ENCODE measurements at regions of chr11 and their contacts with region 1.

Region 1: GRCh38 chr11:6377902-6378639 is 12.2 kb upstream of the SMPD1 start:
- DNase-seq: peak in 1 of 9 experiments; percentile 45
- ATAC-seq: peak; percentile 81
- H3K4me3 ChIP-seq: peak overlapping the region in 1 of 2 experiments; percentile 17
- H3K4me3 Mint-ChIP-seq: peak overlapping the region; percentile 58
- H3K27ac ChIP-seq: peak overlapping the region in 1 of 2 experiments; percentile 7
- H3K27ac Mint-ChIP-seq: peak overlapping the region; percentile 86
- H3K4me1 ChIP-seq: peaks cover 18% of the 10 kb centered on the region
- H3K4me1 Mint-ChIP-seq: peaks cover 28% of the 10 kb centered on the region
- H3K27me3 ChIP-seq: no peaks in the 10 kb centered on the region
- H3K27me3 Mint-ChIP-seq: no peaks in the 10 kb centered on the region
- CTCF ChIP-seq: no peak

Region 2: DNA sequence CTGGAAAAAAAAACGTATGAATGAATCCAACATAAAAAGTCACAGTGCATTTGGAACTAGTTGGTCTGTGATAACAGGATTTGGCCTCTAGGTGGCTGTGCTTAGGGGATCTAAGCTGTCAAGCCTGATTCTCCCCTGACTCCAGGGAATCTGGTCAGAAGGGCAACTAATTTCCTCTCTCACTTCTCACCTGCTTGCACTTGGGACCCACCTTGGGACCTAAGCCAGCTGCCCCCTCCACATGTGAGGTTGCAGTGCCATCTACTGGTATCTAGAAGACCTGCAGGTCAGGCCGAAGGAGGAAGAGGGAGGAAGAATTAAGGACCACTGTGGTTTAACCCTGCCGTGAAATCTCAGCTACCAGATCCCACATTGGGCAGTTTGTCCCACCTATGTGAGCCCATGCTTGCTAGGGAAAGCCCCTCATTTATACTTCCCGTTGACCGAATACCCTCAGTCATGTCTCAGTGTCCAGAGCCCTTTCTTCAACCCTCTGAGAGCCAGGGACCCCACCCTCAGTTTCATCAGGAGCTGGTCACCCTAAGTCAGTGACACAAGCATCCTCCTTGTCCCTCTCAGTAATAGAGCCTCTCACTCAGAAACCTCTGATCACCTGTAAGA is 24.6 kb before region 1 on chr11:
- CTCF ChIA-PET with region 1: interaction called, 16 read pairs
- POLR2A ChIA-PET with region 1: interaction called, 6 read pairs
- intact Hi-C with region 1: no loop called
- DNase-seq: peak; percentile 26 to 73 (median 55)
- ATAC-seq: peak; percentile 75
- H3K4me3 ChIP-seq: no peak overlapping the region
- H3K4me3 Mint-ChIP-seq: no peak overlapping the region
- H3K27ac ChIP-seq: no peak overlapping the region
- H3K27ac Mint-ChIP-seq: no peak overlapping the region
- H3K4me1 ChIP-seq: no peaks in the 10 kb centered on the region
- H3K4me1 Mint-ChIP-seq: peaks cover 2% of the 10 kb centered on the region
- H3K27me3 ChIP-seq: no peaks in the 10 kb centered on the region
- H3K27me3 Mint-ChIP-seq: no peaks in the 10 kb centered on the region
- CTCF ChIP-seq: peak; percentile 92

Region 3: GRCh38 chr11:6402561-6402981 is 24.5 kb after region 1 on chr11:
- CTCF ChIA-PET with region 1: interaction called, 108 read pairs
- POLR2A ChIA-PET with region 1: interaction called, 20 read pairs
- intact Hi-C with region 1: loop called in 1 of 2 experiments (anchors 1 kb)
- DNase-seq: peak; percentile 46 to 95 (median 77)
- ATAC-seq: peak; percentile 76
- H3K4me3 ChIP-seq: peak overlapping the region; percentile 25 to 53
- H3K4me3 Mint-ChIP-seq: peak overlapping the region; percentile 77
- H3K27ac ChIP-seq: peak overlapping the region; percentile 77 to 84
- H3K27ac Mint-ChIP-seq: peak overlapping the region; percentile 94
- H3K4me1 ChIP-seq: peaks cover 95% of the 10 kb centered on the region
- H3K4me1 Mint-ChIP-seq: peaks cover 96% of the 10 kb centered on the region
- H3K27me3 ChIP-seq: no peaks in the 10 kb centered on the region
- H3K27me3 Mint-ChIP-seq: no peaks in the 10 kb centered on the region
- CTCF ChIP-seq: no peak

Region 4: DNA sequence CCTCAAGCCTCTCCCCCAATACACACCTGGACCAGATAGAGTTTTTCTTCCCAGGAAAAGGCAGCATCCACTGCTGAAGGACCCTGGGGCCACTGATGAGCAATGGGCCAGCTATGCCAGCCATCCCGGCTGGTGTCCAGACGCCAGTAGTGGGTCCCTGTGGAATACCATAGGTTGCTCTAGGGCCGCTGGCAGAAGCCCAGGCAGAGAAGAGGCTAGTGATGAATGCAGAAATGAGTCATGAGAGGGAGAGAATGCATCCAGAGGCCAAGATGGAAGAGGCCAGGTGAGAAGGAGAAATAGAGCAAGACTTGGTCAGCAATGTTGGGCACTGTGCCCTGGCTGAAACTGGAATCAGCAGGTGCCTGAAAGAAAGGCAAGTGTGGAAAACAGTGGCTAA is 53.8 kb after region 1 on chr11:
- CTCF ChIA-PET with region 1: interaction called, 733 read pairs
- POLR2A ChIA-PET with region 1: no interaction called
- intact Hi-C with region 1: no loop called
- DNase-seq: no peak
- ATAC-seq: no peak
- H3K4me3 ChIP-seq: no peak overlapping the region
- H3K4me3 Mint-ChIP-seq: no peak overlapping the region
- H3K27ac ChIP-seq: no peak overlapping the region
- H3K27ac Mint-ChIP-seq: no peak overlapping the region
- H3K4me1 ChIP-seq: no peaks in the 10 kb centered on the region
- H3K4me1 Mint-ChIP-seq: peaks cover 5% of the 10 kb centered on the region
- H3K27me3 ChIP-seq: no peaks in the 10 kb centered on the region
- H3K27me3 Mint-ChIP-seq: no peaks in the 10 kb centered on the region
- CTCF ChIP-seq: no peak

Region 5: DNA sequence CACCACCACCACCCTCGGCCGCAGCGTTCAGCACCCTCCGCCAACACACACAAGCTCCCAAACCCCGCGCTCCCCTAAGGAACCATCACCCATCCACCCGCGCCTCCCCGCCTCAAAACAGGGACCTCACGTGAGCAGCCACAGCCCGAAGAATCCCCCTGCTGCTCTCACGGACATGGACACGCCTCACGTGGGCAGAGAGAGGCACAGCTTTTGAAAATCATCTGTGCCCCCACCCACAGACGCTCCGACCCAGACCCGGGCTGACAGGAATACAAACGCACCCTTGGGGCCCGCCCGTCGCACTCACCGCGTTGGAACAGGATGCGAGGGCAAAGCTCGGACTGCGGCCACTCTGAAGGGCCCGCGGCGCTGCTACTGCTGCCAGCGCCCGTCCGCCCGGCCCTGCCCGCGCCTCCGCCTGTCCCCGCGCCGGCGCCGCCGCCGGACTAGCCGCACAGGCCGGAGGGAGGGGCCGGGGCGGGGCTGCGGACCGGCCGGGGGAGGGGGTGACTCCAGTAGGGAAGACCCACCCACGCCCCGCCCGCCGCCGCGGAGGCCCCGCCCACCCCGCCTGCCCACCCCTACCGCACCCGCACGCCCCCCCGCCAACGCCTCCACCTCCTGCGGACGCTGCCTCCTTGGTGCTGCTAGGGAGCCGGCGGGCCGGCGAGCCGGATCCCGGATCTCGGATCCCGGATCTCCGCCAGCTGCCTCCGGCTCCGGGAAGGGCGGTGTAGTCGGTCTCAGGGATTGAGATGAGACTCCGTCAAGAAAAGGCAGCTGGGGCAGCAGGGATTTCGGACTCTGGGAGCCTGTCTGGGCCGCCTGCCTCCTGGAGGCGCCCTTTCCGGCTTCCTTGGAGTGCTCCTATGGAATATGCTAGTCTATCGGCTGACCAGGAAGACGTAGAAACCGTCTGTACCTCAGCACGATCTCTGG is 95.7 kb after region 1 on chr11 and contains the start of gene TRIM3:
- CTCF ChIA-PET with region 1: interaction called, 11 read pairs
- POLR2A ChIA-PET with region 1: interaction called, 3 read pairs
- intact Hi-C with region 1: no loop called
- DNase-seq: peak; percentile 37 to 86 (median 74)
- ATAC-seq: peak; percentile 82
- H3K4me3 ChIP-seq: peak within 1 kb of the TSS; percentile 72 to 74
- H3K4me3 Mint-ChIP-seq: peak within 1 kb of the TSS; percentile 88
- H3K27ac ChIP-seq: peak within 1 kb of the TSS; percentile 37 to 78
- H3K27ac Mint-ChIP-seq: peak within 1 kb of the TSS; percentile 86
- H3K4me1 ChIP-seq: peaks cover 13% of the 10 kb centered on the region
- H3K4me1 Mint-ChIP-seq: peaks cover 22% of the 10 kb centered on the region
- H3K27me3 ChIP-seq: no peaks in the 10 kb centered on the region
- H3K27me3 Mint-ChIP-seq: no peaks in the 10 kb centered on the region
- CTCF ChIP-seq: no peak
- total RNA-seq, gene TRIM3: 14.5 to 18.3 TPM

Region 6: GRCh38 chr11:6497069-6497839 is 119.2 kb after region 1 on chr11 and contains the start of gene DNHD1:
- CTCF ChIA-PET with region 1: interaction called, 30 read pairs
- POLR2A ChIA-PET with region 1: interaction called, 3 read pairs
- intact Hi-C with region 1: no loop called
- DNase-seq: no peak
- ATAC-seq: no peak
- H3K4me3 ChIP-seq: no peak within 1 kb of the TSS
- H3K4me3 Mint-ChIP-seq: no peak within 1 kb of the TSS
- H3K27ac ChIP-seq: no peak within 1 kb of the TSS
- H3K27ac Mint-ChIP-seq: no peak within 1 kb of the TSS
- H3K4me1 ChIP-seq: no peaks in the 10 kb centered on the region
- H3K4me1 Mint-ChIP-seq: peaks cover 11% of the 10 kb centered on the region
- H3K27me3 ChIP-seq: no peaks in the 10 kb centered on the region
- H3K27me3 Mint-ChIP-seq: no peaks in the 10 kb centered on the region
- CTCF ChIP-seq: no peak
- total RNA-seq, gene DNHD1: 34.6 to 41.1 TPM

Region 7: GRCh38 chr11:6548641-6549040 is 170.6 kb after region 1 on chr11:
- CTCF ChIA-PET with region 1: no interaction called
- POLR2A ChIA-PET with region 1: no interaction called
- intact Hi-C with region 1: no loop called
- DNase-seq: no peak
- ATAC-seq: no peak
- H3K4me3 ChIP-seq: no peak overlapping the region
- H3K4me3 Mint-ChIP-seq: no peak overlapping the region
- H3K27ac ChIP-seq: no peak overlapping the region
- H3K27ac Mint-ChIP-seq: no peak overlapping the region
- H3K4me1 ChIP-seq: no peaks in the 10 kb centered on the region
- H3K4me1 Mint-ChIP-seq: no peaks in the 10 kb centered on the region
- H3K27me3 ChIP-seq: no peaks in the 10 kb centered on the region
- H3K27me3 Mint-ChIP-seq: no peaks in the 10 kb centered on the region
- CTCF ChIP-seq: no peak

Region 8: GRCh38 chr11:6667733-6668374 is 289.8 kb after region 1 on chr11:
- CTCF ChIA-PET with region 1: interaction called, 11 read pairs
- POLR2A ChIA-PET with region 1: no interaction called
- intact Hi-C with region 1: no loop called
- DNase-seq: peak in 6 of 9 experiments; percentile 16 to 81 (median 50)
- ATAC-seq: peak; percentile 76
- H3K4me3 ChIP-seq: no peak overlapping the region
- H3K4me3 Mint-ChIP-seq: peak overlapping the region; percentile 13
- H3K27ac ChIP-seq: peak overlapping the region in 1 of 2 experiments; percentile 47
- H3K27ac Mint-ChIP-seq: peak overlapping the region; percentile 81
- H3K4me1 ChIP-seq: peaks cover 59% of the 10 kb centered on the region
- H3K4me1 Mint-ChIP-seq: peaks cover 66% of the 10 kb centered on the region
- H3K27me3 ChIP-seq: no peaks in the 10 kb centered on the region
- H3K27me3 Mint-ChIP-seq: no peaks in the 10 kb centered on the region
- CTCF ChIP-seq: peak; percentile 57

Region 9: DNA sequence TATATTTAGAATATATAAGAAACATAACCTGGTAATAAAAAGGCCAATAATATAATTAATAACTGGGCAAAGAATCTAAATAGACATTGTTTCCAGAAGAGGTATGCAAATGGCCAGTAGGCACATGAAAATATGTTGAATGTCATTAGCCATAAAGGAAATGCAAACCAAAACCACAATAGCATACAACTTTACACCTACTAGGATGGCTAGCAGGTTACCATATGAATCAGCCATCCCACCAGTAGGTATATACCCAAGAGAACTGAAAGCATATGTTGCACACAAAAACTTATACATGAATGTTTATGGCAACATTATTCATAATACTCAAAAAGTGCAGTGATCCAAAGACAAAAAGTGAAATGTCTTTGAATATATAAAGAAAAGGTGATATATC is 516.9 kb after region 1 on chr11:
- CTCF ChIA-PET with region 1: no interaction called
- POLR2A ChIA-PET with region 1: no interaction called
- intact Hi-C with region 1: no loop called
- DNase-seq: no peak
- ATAC-seq: no peak
- H3K4me3 ChIP-seq: no peak overlapping the region
- H3K4me3 Mint-ChIP-seq: no peak overlapping the region
- H3K27ac ChIP-seq: no peak overlapping the region
- H3K27ac Mint-ChIP-seq: no peak overlapping the region
- H3K4me1 ChIP-seq: no peaks in the 10 kb centered on the region
- H3K4me1 Mint-ChIP-seq: no peaks in the 10 kb centered on the region
- H3K27me3 ChIP-seq: no peaks in the 10 kb centered on the region
- H3K27me3 Mint-ChIP-seq: peaks cover 25% of the 10 kb centered on the region
- CTCF ChIP-seq: no peak

Region 10: DNA sequence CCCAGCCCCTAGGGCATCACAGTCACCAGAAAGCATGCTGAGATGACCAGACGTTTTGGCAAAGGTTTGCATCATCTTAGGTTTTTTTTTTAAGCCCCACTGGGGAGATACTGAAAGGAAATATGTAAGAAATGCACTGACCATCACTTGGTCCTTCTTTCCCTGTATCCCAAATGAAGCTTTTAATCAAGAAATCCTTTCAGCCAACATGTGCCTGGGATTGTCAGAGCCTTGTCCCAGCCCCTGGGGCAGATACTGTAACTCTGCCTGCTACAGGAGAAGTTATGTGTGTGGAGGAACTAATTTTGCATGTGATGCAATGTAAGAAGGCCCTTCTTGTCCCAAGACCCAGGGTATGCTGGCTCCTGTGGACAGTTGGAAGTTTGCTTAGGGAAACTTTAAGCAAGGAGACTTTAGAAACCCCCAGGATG is 1201.3 kb after region 1 on chr11:
- CTCF ChIA-PET with region 1: no interaction called
- POLR2A ChIA-PET with region 1: no interaction called
- intact Hi-C with region 1: no loop called
- DNase-seq: no peak
- ATAC-seq: no peak
- H3K4me3 ChIP-seq: no peak overlapping the region
- H3K4me3 Mint-ChIP-seq: no peak overlapping the region
- H3K27ac ChIP-seq: no peak overlapping the region
- H3K27ac Mint-ChIP-seq: no peak overlapping the region
- H3K4me1 ChIP-seq: peaks cover 36% of the 10 kb centered on the region
- H3K4me1 Mint-ChIP-seq: peaks cover 40% of the 10 kb centered on the region
- H3K27me3 ChIP-seq: peaks cover 0 to 3% of the 10 kb centered on the region in 2 experiments
- H3K27me3 Mint-ChIP-seq: peaks cover 33% of the 10 kb centered on the region
- CTCF ChIP-seq: no peak

Measured in CD8-positive, alpha-beta T cell (primary cell).